GM10248 (cell line): ENCODE measurements at regions of chr12 and their contacts with region 1.

Region 1: GRCh38 chr12:29088611-29089219 is 60.4 kb upstream of the FAR2 start:
- DNase-seq: peak; percentile 21
- CTCF ChIP-seq: peak; percentile 35

Region 2: DNA sequence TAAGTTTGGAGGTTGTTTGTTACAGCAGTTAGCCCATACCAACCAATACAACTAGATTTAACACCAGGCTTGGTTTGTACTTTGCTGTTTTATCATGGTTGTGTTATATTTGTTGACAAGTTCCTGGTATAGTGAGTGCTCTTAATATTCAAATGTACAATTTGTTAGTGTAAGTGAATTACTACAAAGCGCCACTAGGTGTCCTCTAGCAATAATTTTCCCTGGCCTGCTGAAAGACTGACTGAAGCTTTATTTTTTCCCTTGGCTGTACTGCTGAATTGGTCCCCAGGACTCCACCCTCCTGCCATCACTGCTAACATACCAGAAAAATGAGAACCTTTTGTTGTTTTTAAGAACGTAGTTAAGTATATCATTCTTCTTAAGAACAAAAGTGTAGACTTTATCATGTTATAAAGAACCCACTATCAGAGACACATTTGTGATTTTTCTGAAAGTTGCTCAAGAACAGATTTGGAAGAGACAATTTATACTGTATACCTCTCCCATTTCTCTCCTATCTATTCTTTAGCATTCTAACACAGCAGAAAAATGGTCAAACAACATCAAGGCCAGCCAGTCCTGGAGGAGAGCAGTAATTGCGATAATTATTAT is 15.0 kb before region 1 on chr12:
- CTCF ChIA-PET with region 1: interaction called, 19 read pairs
- POLR2A ChIA-PET with region 1: no interaction called
- DNase-seq: peak; percentile 20
- CTCF ChIP-seq: peak; percentile 56

Region 3: DNA sequence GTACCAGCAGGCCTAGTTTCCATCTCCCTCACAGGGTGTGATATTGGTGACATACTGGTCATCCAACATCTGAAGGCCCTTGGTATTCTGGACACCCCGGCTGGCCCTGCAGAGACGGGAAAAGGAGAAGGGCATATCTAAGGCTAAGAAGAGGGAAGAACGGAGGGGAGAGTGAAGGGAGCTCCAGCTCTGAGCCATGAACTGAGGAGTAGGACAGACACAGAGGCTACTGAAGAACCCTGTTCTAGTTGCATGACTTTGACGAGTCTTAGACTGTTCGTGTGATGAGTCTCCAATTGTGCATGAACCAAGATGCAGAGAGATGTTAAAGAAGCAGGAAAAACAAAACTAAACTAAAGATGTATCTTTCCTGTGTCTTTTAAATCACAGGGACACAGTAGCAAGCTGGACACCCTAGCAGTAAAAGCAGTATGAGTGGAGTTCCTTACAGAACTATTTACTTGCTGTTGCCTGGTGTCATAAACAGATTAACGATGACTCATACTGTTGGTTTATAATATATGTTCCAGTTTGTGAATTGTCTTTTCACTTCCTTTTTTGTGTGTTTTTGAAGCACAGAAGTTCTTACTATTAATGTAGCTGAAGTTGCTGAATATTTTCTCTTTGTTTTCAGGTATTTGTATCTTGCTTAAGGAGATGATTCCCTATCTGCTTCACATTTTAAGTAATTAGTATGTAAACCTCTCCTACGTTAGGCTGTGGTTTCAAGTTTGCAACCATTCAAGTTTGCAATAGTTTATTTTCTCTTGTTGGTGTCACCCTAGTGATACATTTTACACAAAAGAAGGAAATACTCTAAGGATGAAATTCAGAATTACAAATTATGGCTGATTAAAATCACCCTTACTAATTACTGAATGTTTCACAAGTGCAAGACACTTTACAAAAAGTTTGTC is 76.0 kb after region 1 on chr12:
- CTCF ChIA-PET with region 1: no interaction called
- POLR2A ChIA-PET with region 1: no interaction called
- DNase-seq: peak; percentile 75
- CTCF ChIP-seq: no peak